BJ (cell line): ENCODE measurements at regions of chr15 and their contacts with region 1.

Region 1: GRCh38 chr15:50876989-50877360 is 31.5 kb upstream of the AP4E1 start:
- DNase-seq: peak; percentile 84
- H3K4me3 ChIP-seq: peak overlapping the region; percentile 32
- H3K27me3 ChIP-seq: no peaks in the 10 kb centered on the region; the same call in none of the 2 replicates
- CTCF ChIP-seq: peak; percentile 96

Region 2: DNA sequence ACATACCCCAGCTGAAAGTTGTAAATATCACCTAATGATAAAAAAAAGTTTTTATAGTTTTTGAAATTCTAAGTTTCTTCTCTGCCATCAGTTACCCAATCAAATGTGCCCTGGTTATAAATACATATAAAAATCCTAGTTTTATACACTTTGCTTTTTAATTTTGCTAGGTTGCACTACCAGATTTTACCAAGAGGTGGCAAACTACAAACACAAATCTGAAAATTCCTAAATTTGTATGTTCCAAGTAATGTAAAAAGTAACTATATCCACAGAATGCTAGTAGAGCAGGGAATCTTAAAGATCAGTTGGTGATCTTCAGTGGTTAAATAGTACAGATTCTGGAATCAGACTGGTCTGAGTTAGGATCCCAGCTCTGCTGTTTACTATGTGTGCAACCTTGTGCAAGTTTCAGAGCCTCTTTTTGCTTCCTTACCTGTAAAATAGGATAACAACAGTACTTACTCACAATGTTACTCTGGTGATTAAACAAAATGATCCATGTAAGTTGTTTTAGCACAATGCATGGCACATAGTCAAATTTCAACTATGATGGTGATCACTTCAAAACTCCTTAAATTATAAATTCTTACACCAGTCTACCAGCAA is 201.3 kb before region 1 on chr15:
- CTCF ChIA-PET with region 1: interaction called, 34 read pairs
- POLR2A ChIA-PET with region 1: no interaction called
- DNase-seq: no peak
- H3K4me3 ChIP-seq: no peak overlapping the region
- H3K27me3 ChIP-seq: no peaks in the 10 kb centered on the region
- CTCF ChIP-seq: peak; percentile 63

Region 3: GRCh38 chr15:50865515-50866353 is 11.2 kb before region 1 on chr15:
- CTCF ChIA-PET with region 1: interaction called, 17 read pairs
- POLR2A ChIA-PET with region 1: no interaction called
- DNase-seq: no peak
- H3K4me3 ChIP-seq: no peak overlapping the region
- H3K27me3 ChIP-seq: 0 out of 2 replicates have a peak, but pooled peaks cover 2% of the 10 kb centered on the region
- CTCF ChIP-seq: no peak

Region 4: DNA sequence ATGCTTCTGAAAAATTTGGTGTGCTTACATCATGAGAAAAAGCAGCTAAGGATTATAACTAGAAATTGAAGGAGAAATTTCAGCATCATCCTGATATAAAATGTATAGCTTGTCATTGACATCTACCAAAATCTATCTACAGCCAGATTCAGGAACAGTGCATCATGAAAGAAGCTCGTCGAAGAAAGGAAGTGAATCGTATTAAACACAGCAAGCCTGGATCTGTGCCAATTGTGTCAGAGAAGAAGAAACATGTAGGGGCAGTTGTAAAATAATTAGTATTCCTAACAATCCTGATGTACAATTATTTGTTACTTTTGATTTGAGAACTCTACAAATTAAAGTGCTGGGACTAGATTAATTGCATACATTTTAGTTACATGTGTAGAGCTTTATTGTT is 68.8 kb after region 1 on chr15:
- CTCF ChIA-PET with region 1: no interaction called
- POLR2A ChIA-PET with region 1: no interaction called
- DNase-seq: no peak
- H3K4me3 ChIP-seq: no peak overlapping the region
- H3K27me3 ChIP-seq: no peaks in the 10 kb centered on the region
- CTCF ChIP-seq: no peak